Body of pancreas (tissue), 4 donors: ENCODE measurements at regions of chrX and their contacts with region 1.

Region 1: DNA sequence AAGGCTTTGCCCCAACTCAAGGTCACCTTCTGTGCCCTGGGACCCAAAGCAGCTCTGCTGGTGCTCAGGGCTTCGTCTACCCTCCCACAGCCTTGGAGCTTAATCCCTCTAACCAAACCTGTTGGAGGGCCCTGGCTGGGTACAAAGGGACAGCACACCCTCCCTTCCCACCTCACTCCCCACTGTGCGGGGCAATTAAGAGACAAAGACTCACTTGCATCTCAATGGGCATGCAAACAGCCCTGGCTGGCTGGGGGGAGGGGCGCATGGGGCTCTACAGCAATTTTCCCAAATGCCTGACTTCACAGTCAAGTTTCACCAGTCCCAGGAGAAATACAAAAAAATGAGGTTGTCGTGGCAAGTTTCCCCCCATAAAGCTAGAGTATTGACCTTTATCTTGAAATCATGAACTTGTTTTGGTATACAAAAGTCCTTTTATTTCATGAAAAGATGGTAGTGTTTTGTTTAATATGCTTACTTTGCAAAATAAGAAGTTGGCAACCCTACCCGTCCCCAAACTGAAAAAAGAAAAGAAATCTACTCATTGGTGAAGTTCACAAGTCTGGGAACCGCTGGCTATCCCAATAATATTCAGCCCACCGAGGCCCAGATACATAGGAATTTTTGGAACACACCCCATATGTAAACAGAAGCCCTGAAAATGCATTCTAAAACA is 4.1 kb upstream of the CD99L2 start:
- DNase-seq: no peak
- ATAC-seq: no peak
- H3K4me3 ChIP-seq: no peak overlapping the region
- H3K27ac ChIP-seq: no peak overlapping the region
- H3K4me1 ChIP-seq: peaks cover under 1% of the 10 kb centered on the region
- H3K27me3 ChIP-seq: no peaks in the 10 kb centered on the region
- CTCF ChIP-seq: no peak
- POLR2A ChIP-seq: no peak

Region 2: DNA sequence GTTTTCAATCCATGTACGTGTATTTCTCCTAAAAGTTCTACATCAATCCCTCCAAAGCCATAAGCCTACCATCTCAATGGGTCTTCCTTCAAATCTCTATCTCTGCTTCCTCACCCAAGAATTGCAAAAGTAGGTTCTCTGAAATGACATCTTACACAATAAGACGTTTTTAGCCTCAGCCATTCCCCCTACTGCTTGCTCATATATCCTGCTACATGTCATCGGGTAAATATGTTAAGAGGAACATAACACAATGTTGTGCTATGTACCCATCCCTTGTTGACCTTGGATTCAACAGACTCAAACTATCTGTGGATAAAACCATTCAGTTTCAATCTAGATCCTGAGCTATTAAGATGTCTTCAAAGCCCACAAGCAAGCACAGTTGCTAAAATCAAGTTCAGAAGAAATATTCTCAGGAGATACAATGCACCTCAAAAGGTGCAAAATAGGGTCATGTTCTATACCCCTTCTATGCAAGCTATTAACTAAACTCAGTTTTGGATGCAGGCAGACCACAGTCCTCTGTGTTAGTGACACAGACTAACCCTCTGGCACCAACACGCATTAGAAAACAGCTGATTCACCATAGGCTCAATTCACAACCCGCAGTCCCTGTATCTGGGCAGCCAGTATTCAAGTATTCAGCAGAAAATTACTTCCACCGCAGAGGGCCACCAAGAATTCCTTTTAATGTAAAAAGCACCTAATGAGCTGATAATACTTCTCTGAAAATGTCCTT is 60.9 kb before region 1 on chrX:
- intact Hi-C with region 1: no loop called
- DNase-seq: peak in 1 of 4 donors; percentile 5
- ATAC-seq: peak; percentile 62
- H3K4me3 ChIP-seq: no peak overlapping the region
- H3K27ac ChIP-seq: no peak overlapping the region
- H3K4me1 ChIP-seq: peaks cover 23% of the 10 kb centered on the region
- H3K27me3 ChIP-seq: no peaks in the 10 kb centered on the region
- CTCF ChIP-seq: no peak
- POLR2A ChIP-seq: no peak

Region 3: DNA sequence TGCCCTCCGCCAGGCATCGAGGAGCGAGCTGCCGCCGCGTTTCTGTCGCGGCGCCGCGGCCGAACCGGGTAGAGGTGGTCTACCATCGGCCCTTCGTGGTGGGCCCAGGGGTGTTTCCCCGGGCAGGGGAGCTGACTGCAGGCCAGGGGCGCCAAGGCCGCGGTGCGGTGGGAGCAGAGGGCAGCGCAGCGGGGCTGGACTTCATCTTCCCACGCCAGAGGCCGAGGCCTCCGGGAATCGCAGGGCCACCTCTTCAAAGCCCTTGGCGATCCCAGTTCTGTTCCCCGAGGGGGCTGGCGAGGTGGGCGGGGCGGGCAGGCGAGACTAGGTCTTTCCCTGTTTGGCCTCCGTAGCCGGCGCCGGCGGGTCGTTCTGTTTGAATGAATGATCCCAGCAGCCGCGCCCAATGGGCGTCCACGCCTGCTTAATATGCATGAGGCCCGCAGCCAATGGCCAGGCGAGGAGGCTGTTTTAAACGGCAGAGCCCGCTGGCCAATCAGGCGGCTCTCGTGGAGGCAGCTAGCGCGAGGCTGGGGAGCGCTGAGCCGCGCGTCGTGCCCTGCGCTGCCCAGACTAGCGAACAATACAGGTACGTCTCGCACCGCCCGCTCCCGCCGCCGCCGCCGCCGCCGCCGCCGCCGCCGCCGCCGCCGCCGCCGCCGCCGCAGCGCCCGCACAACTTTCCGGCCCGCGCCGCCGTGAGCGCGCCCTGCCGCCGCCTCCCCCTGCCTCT is 80.4 kb after region 1 on chrX and contains the start of gene HMGB3:
- intact Hi-C with region 1: loop called (anchors 10 kb)
- DNase-seq: peak; percentile 83 to 92 (median 87)
- ATAC-seq: peak; percentile 97
- H3K4me3 ChIP-seq: peak within 1 kb of the TSS in 1 of 2 donors; percentile 20
- H3K27ac ChIP-seq: peak within 1 kb of the TSS in 3 of 4 donors; percentile 65 to 84 (median 69)
- H3K4me1 ChIP-seq: peaks cover 5% of the 10 kb centered on the region
- H3K27me3 ChIP-seq: no peaks in the 10 kb centered on the region
- CTCF ChIP-seq: no peak
- POLR2A ChIP-seq: peak; percentile 36 to 68 (median 63)
- total RNA-seq, gene HMGB3: 1.3 to 1.6 TPM